Ascending aorta (tissue), 2 donors: ENCODE measurements at regions of chr22 and their contacts with region 1.

Region 1: DNA sequence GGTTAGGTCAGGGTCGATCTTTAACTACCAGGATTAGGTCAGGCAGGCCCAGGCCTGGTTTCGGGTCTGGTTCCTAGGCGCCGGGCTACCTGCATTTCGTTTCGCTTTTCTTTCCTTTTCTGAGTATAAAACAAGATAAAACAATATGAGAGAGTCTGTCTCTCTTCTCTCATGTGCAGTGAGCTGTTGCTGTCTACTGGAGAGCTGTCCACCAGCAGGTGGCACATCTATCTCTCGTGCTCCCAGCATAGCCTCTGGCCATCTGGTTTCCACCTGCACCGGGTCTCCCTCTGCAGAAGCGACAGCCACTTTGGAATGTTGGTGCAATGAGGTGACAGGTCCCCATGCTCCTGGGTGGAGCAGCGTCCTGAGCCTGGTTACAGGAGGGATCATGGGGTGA is 27.6 kb downstream of the RIBC2 start:
- DNase-seq: peak in 1 of 2 donors; percentile 81
- H3K4me3 ChIP-seq: no peak overlapping the region
- H3K27ac ChIP-seq: no peak overlapping the region
- H3K4me1 ChIP-seq: no peaks in the 10 kb centered on the region
- H3K27me3 ChIP-seq: no peaks in the 10 kb centered on the region
- CTCF ChIP-seq: peak; percentile 66 to 77 (median 67)

Region 2: DNA sequence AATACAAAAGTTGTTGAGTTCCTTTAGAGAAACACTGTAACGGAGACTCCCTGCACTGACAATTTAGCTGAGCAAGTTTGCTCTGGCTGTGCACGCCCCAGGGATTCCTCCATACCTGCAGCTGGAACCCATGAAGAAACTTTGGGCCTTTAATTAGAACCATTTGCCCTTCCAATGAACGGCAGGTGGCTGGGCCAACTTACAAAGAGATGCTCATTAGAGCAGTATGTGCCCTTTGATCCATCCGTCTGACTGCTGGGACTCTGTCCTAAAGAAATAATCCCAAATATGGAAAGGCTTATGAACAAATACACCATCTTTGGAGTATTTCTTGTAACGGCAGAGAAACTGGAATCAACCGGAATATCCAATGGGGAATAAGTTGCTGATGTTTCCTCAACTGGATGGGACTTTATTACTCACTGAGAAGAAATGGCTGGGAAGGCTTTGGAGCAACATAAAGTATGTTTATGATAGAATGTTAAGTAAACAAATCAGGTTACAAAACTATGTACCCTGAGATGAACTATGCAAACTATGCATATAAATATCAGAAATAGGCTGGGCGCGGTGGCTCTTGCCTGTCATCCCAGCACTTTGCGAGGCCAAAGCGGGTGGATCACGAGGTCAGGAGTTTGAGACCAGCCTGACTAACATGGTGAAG is 37.1 kb after region 1 on chr22:
- intact Hi-C with region 1: loop called (anchors 5 kb)
- DNase-seq: no peak
- H3K4me3 ChIP-seq: no peak overlapping the region
- H3K27ac ChIP-seq: peak overlapping the region; percentile 65 to 86
- H3K4me1 ChIP-seq: peaks cover 5 to 22% of the 10 kb centered on the region in 2 donors
- H3K27me3 ChIP-seq: no peaks in the 10 kb centered on the region
- CTCF ChIP-seq: no peak

Region 3: DNA sequence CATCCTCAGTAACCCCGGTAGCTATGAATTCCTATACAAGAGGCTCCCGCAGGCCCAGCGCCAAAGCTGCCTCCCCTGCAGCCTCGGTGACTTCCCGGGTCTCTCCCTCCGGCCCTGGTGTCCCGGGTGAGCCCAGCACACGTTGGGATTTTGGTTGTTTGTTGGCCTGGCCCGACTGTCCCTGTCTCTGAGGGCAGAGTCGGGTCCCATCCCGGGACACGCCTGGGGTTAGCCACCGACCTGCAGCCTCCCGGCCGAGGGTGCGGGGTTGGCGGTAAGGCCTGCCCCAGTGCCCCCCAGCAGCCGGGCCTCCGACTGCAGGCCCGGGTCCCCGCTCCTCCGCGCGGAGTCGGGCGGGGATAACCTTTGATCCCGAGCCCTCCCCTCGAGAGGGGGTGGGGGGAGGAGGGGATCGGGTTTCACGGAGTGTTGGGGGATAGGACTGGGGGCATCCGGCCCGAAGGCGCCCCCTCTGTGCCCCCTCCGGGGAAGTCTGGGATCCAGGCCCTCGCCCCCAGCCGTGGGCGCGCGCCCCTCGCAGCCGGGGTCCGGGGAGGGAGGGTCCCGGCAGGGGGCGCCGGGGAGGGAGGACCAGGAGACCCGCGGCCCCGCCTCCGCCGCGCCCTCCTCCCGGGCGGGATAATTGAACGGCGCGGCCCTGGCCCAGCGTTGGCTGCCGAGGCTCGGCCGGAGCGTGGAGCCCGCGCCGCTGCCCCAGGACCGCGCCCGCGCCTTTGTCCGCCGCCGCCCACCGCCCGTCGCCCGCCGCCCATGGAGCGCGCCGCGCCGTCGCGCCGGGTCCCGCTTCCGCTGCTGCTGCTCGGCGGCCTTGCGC is 61.3 kb after region 1 on chr22 and contains the start of gene FBLN1:
- intact Hi-C with region 1: loop called (anchors 5 kb)
- DNase-seq: no peak
- H3K4me3 ChIP-seq: peak within 1 kb of the TSS; percentile 56 to 70
- H3K27ac ChIP-seq: peak within 1 kb of the TSS; percentile 66 to 72
- H3K4me1 ChIP-seq: peaks cover 0 to 22% of the 10 kb centered on the region in 2 donors
- H3K27me3 ChIP-seq: no peaks in the 10 kb centered on the region
- CTCF ChIP-seq: peak in 2 of 3 experiments; percentile 16 to 30
- total RNA-seq, gene FBLN1: 580 TPM